Activated T-helper 1 cell treated with anti-CD3 and anti-CD28 coated beads, Interleukin-12 subunit alpha, Interleukin-12 subunit beta, Interleukin-2, Interleukin-4 antibody, amounts not matched to agents 30 ng/mL and 10 ng/mL and 1 ng/mL, durations not matched to agents 14 hours and 24 hours and 36 hours (primary cell): ENCODE measurements at regions of chr12 and their contacts with region 1.

Region 1: DNA sequence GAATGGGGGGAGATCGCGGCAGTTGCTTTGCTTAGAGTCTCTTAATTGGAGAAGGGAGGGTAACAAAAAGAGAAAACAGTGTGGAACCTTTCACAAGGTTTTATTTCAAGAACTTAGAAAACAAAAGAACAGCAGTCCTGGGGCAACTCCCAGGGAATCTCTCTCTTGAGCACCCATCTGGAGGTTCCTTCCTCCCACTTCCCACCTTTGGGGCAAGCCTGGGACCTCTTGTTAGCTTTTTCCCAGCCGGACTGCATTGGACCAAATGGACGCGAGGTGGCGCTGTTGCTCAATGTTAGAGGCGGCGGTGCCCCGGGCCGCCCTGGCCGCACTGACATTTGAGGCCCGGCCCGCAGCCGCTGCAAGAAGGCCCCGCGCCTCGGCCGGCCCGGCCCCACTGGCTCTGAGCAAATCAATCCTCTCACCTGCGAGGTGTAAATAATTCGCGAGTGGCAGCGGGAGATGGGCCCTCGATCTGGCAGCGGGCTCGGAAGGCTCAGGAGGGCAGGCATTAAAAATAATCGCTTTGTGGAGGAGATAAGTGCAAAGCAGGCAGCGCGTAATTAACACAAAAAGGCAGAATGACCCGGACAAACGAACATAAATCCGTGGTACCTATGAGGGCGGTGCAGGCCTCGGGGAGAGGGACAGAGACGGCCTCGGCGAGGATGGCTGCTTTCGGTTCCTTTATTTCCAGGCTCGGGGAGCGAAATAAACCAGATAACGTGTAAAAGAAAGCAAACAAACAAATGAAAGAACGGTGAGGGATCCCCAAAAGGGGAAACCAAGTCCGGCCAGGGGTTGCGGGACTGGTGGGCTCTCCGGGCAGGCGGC is 2.7 kb upstream of the HOXC8 start:
- DNase-seq: peak; percentile 76
- H3K4me3 Mint-ChIP-seq: peak overlapping the region; percentile 83
- H3K27ac Mint-ChIP-seq: no peak overlapping the region
- H3K4me1 Mint-ChIP-seq: peaks cover 32% of the 10 kb centered on the region
- H3K27me3 Mint-ChIP-seq: peaks cover 92% of the 10 kb centered on the region

Region 2: DNA sequence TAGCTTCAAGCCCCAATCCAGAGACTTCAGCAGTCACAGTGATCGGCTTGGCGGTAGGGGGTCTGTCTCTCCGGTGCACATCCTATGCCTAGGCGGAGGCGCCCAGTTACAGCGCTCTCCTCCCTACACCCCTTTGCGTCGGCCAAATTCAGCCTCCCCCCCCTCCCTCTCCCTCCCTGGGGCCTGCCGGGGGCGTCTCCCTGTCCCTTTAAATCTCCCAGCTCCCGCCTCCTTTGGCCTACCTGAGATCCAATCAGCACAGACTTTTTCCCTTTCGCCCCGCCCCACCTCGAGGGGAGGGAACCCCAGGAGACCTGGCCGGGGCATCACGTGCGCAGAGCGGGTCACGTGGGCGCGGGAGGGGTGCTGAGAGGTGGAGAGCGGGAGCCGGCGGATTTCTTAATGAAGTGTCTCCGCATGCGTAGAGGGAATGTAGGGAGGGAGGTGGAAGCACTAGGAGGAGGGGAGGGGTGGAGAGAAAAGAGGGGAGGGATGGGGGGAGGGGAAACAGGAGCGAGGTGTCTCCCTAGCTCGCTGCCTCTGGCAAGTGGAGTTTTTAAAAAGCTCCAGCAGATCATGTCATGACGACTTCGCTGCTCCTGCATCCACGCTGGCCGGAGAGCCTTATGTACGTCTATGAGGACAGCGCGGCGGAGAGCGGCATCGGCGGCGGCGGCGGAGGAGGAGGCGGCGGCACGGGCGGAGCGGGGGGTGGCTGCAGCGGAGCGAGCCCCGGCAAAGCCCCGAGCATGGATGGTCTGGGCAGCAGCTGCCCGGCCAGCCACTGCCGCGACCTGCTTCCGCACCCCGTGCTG is 67.5 kb before region 1 on chr12 and contains the start of gene HOXC13:
- intact Hi-C with region 1: no loop called
- DNase-seq: no peak
- H3K4me3 Mint-ChIP-seq: no peak within 1 kb of the TSS
- H3K27ac Mint-ChIP-seq: peak within 1 kb of the TSS; percentile 31
- H3K4me1 Mint-ChIP-seq: no peaks in the 10 kb centered on the region
- H3K27me3 Mint-ChIP-seq: peaks cover 79% of the 10 kb centered on the region
- total RNA-seq, gene HOXC13: not detected in 2 replicates

Region 3: DNA sequence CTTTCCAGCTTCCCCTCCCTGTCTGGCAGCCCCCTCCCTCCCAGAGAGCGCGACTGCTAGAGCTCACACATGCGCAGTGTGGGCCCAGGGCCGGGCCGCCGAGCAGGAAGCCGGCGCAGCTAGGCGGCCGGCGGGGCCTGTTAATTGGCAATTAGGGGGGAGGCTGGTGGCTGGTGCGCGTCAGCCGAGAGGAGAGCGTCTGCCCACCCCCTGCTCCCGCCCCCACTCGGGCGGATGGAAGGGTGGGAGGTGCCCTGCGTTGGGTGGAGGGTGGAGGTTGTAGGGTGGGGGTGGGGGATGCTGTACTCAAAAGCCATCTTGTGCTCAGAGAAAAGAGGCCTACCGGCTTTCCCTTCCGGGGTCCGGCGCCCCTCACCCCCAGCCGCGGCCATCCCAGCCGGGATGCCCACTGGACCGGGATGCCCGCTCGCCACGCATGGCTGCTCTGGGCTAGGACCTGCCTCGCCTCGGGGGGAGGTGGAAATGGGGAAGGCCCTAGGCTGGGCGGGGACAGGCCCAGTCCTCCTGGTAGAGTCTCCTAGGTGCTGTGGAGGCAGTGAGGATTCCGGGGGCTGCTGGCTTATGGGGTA is 11.9 kb after region 1 on chr12:
- intact Hi-C with region 1: loop called (anchors 1 kb)
- DNase-seq: peak; percentile 62
- H3K4me3 Mint-ChIP-seq: peak overlapping the region; percentile 82
- H3K27ac Mint-ChIP-seq: peak overlapping the region; percentile 67
- H3K4me1 Mint-ChIP-seq: peaks cover 21% of the 10 kb centered on the region
- H3K27me3 Mint-ChIP-seq: peaks cover 71% of the 10 kb centered on the region

Region 4: GRCh38 chr12:54053751-54054741 is 48.0 kb after region 1 on chr12 and contains the start of gene HOXC4:
- intact Hi-C with region 1: loop called (anchors 2 kb)
- DNase-seq: no peak
- H3K4me3 Mint-ChIP-seq: peak within 1 kb of the TSS; percentile 57
- H3K27ac Mint-ChIP-seq: no peak within 1 kb of the TSS
- H3K4me1 Mint-ChIP-seq: peaks cover 18% of the 10 kb centered on the region
- H3K27me3 Mint-ChIP-seq: peaks cover 89% of the 10 kb centered on the region
- total RNA-seq, gene HOXC4: not detected in 2 replicates

Region 5: GRCh38 chr12:54201001-54201794 is 195.1 kb after region 1 on chr12:
- intact Hi-C with region 1: loop called (anchors 1 kb)
- DNase-seq: peak; percentile 47
- H3K4me3 Mint-ChIP-seq: no peak overlapping the region
- H3K27ac Mint-ChIP-seq: no peak overlapping the region
- H3K4me1 Mint-ChIP-seq: no peaks in the 10 kb centered on the region
- H3K27me3 Mint-ChIP-seq: peaks cover 48% of the 10 kb centered on the region

Region 6: GRCh38 chr12:54379401-54380201 is 373.5 kb after region 1 on chr12:
- intact Hi-C with region 1: loop called (anchors 5 kb)
- DNase-seq: peak; percentile 84
- H3K4me3 Mint-ChIP-seq: peak overlapping the region; percentile 70
- H3K27ac Mint-ChIP-seq: no peak overlapping the region
- H3K4me1 Mint-ChIP-seq: peaks cover 13% of the 10 kb centered on the region
- H3K27me3 Mint-ChIP-seq: peaks cover 6% of the 10 kb centered on the region